AG04449 (cell line): ENCODE measurements at regions of chr9 and their contacts with region 1.

Region 1: GRCh38 chr9:86434039-86434726 is 80.0 kb upstream of the TUT7 start:
- DNase-seq: no peak
- H3K4me3 ChIP-seq: peak overlapping the region; percentile 40
- CTCF ChIP-seq: peak; percentile 72

Region 2: DNA sequence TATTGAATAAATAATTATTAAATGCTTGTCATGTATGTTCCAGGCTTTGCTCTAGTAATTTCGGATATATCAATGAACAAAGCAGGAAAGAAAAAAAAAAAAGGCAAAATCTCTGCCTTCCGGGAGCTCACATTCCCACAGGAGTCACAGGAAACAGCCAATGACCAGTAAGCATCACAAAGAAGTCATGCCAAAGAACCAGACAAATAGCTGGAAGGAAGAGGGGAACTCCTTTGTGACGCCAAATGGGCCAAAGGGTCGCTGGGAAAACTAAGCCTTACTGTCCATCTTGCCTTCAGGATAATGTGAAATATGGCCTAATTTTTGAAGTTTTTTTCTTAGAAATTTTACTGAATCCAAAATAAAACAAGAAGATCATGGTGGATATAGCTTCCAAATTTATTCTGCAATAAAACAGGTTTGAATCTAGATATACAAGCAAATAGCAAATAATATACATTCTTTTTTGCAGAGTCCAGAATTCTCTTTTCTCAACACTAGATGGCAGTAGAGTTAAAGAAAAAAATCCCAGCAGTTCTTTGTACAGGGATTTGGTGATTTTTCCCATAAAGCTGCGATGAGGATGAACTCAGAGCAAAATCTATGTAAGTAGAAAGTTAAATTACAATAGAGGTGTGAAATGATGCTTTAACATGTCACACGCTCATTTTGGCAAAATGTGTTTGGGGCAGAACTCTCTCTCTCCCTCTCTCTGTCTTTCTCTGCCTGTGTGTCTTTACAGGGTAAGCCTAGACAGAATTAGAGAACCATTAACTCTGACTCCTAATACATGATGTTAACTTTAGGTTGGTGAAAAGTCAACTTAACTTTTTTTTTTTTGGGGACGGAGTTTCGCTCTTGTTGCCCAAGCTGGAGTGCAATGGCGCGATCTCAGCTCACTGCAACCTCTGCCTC is 20.0 kb before region 1 on chr9:
- CTCF ChIA-PET with region 1: interaction called, 26 read pairs
- POLR2A ChIA-PET with region 1: no interaction called
- DNase-seq: no peak
- H3K4me3 ChIP-seq: no peak overlapping the region
- CTCF ChIP-seq: peak; percentile 31

Region 3: DNA sequence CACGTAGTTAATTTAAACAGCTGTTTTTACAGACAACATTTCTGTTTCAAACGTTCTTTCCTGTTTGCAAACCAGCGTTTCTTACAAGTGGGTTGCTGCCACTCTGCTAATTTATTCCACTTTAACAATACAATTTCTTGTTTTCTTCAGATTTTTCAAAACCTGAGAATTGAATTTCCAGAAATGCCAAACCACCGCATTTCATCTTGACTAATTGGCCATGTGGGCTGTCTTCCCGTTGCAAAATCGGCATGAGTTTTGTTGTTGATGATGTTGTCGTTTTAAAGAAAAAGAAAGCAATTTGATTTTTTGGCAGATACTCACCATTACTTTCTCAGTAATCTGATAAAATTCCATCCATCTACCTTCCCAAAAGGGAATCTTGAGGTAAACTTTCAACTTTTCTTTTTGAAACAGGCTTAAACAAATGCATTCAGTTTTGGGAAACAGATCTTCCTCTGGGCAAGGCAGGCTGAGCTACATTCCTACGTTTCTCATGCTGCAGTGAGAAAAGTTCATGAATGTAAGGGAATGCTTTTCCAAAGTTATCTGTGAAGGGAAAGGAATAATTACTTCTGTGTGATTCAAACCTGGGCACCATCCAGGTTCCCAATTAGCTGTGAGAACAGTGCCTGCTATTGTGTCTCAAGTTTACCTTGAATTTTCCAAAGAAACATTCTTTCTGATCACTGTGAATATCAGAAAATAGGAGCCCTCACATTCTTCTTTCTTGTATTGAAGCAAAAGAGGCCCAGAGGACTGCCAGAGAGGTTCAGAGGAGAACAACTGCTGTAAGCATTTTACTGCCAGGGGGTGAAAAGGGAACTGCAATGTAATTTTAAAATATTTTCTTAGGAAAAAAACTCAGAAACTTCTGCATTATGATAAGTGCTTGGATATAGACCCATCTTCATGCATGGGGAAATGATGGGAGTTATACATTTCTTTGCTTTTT is 20.8 kb after region 1 on chr9:
- CTCF ChIA-PET with region 1: interaction called, 12 read pairs
- POLR2A ChIA-PET with region 1: no interaction called
- DNase-seq: no peak
- H3K4me3 ChIP-seq: no peak overlapping the region
- CTCF ChIP-seq: no peak

Region 4: DNA sequence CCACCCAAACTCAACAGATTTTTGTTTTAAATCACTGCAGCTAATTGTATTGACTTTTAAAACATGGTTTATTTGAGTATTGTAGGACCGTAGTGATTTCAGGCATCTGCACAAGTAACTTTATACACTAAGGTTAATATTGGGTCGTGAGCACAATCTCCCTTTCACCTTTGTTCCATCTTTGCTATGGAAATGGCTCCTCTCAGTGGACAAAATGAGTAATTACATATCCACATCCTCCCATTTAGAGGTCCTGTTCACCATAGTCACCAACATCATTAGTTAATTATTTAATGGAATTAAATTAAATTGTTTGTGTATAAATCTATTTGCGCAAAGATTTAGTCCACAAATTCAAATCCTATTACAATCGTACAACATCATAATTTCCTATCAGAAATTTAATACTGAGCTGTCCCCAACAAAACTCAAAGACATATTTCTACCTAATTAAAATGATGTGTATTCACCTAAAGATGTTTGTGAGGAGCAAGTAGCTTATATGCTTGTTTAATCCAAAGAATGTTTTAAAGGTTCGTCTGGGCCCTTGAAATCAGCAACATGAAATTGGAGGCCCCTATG is 890.5 kb after region 1 on chr9:
- CTCF ChIA-PET with region 1: interaction called, 58 read pairs
- POLR2A ChIA-PET with region 1: no interaction called
- DNase-seq: no peak
- H3K4me3 ChIP-seq: no peak overlapping the region
- CTCF ChIP-seq: peak; percentile 48